Activated CD8-positive, alpha-beta T cell treated with anti-CD3 and anti-CD28 coated beads for 36 hours (primary cell): ENCODE measurements at regions of chr3 and their contacts with region 1.

Region 1: DNA sequence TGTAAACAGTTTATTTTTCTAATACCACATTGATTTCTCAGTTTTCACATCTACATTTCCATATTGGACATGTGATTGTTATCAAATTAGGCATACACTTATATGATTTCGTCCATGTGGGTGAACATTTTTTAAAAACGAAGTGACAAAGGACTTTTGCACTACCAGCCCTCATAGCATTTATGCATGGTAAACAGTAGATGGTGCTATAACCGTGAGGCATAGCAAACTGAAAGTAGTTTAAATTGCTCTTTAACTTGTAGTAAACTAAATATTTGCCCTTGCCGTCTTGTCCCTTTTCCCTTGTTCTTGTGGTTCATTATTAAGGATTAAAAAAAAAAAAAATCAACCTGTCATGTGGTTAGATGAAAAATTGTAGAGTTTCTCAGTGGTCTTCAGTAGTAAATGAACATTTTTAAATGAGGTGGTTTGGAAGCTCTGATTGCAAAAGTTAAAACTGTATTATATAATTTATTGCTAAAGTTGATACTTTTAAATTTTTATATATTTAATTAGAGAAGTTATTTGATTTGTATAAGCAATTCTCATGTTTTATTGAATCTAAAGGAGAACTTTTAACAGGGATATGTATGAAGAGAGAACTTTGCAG is 24.0 kb downstream of the STX19 start:
- DNase-seq: no peak
- ATAC-seq: peak; percentile 83
- H3K4me3 Mint-ChIP-seq: peak overlapping the region; percentile 44
- H3K27ac Mint-ChIP-seq: no peak overlapping the region
- H3K4me1 Mint-ChIP-seq: peaks cover 2% of the 10 kb centered on the region
- H3K27me3 Mint-ChIP-seq: no peaks in the 10 kb centered on the region
- CTCF ChIP-seq: peak; percentile 86

Region 2: DNA sequence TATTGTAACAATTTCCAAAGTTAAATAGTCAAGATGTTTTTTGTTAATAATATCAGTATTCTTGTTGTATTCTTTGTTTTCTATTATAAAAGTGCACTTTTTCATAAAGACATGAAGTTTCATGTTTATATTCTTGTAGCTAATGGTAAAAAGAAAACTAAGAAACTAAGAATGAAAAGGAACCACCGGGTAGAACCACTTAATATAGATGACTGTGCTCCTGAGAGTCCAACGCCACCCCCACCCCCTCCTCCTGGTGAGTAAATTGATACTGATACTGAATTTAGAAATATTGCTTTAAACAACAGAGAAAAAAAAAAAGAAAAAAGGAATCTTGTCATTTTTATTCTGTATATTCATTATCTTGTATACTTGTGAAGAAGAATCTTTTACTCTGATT is 44.9 kb after region 1 on chr3:
- CTCF ChIA-PET with region 1: no interaction called
- POLR2A ChIA-PET with region 1: no interaction called
- intact Hi-C with region 1: no loop called
- DNase-seq: peak; percentile 13
- ATAC-seq: no peak
- H3K4me3 Mint-ChIP-seq: no peak overlapping the region
- H3K27ac Mint-ChIP-seq: no peak overlapping the region
- H3K4me1 Mint-ChIP-seq: no peaks in the 10 kb centered on the region
- H3K27me3 Mint-ChIP-seq: no peaks in the 10 kb centered on the region
- CTCF ChIP-seq: no peak

Region 3: GRCh38 chr3:94069194-94069813 is 64.9 kb after region 1 on chr3:
- CTCF ChIA-PET with region 1: interaction called, 99 read pairs
- POLR2A ChIA-PET with region 1: no interaction called
- intact Hi-C with region 1: loop called (anchors 1 kb)
- DNase-seq: no peak
- ATAC-seq: no peak
- H3K4me3 Mint-ChIP-seq: no peak overlapping the region
- H3K27ac Mint-ChIP-seq: peak overlapping the region; percentile 7
- H3K4me1 Mint-ChIP-seq: peaks cover 78% of the 10 kb centered on the region
- H3K27me3 Mint-ChIP-seq: no peaks in the 10 kb centered on the region
- CTCF ChIP-seq: peak; percentile 64